OCI-LY7 (cell line): ENCODE measurements at regions of chr1 and their contacts with region 1.

Region 1: GRCh38 chr1:53945433-53946251 is at the start of gene IFT25:
- DNase-seq: peak; percentile 92
- H3K4me3 ChIP-seq: peak within 1 kb of the TSS; percentile 71
- H3K27ac ChIP-seq: peak within 1 kb of the TSS; percentile 50
- H3K4me1 ChIP-seq: peaks cover 18% of the 10 kb centered on the region
- CTCF ChIP-seq: no peak
- total RNA-seq, gene IFT25: 57.0 and 61.0 TPM in 2 replicates

Region 2: DNA sequence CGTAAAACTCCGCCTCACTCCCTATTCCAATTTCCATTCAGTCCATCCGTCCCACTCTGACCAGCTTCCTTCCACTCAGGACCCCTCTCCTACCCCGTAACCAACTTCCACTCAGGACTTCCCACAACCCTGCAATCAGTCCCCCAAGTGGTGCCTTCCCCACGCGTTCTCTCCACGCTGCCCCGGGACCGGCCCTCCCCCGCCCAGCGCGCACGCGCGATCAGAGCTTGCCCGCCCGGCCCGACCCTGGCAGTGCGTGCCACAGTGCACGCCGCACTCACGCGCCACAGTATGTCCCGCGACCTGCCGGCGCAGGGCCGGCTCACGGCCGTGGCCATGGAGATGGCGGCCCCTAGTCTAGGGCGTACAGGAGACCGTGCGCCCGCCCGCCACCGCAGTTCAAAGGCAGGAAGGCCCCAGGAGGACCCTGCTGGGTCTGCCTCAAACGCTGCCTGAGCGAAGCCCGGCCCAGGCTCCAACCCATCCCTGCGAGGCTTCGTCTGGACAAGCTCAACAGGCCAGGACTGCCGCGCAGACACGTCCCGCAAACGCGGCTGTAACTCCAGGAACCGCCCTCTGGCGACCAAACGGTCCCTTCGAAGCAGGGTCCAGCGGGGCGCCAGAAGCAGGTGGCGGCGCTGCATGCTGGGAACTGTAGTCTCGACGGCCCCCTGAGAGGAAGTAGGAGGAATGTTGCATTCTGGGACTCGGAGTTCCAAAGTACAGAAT is 107.6 kb before region 1 on chr1 and contains the start of gene NDC1:
- CTCF ChIA-PET with region 1: no interaction called
- POLR2A ChIA-PET with region 1: interaction called, 7 read pairs
- intact Hi-C with region 1: loop called (anchors 1 kb)
- DNase-seq: peak; percentile 96
- H3K4me3 ChIP-seq: peak within 1 kb of the TSS; percentile 83
- H3K27ac ChIP-seq: peak within 1 kb of the TSS; percentile 83
- H3K4me1 ChIP-seq: peaks cover 32% of the 10 kb centered on the region
- CTCF ChIP-seq: peak; percentile 23; the same call in 1 of the 2 replicates
- total RNA-seq, gene NDC1: 40.0 and 51.8 TPM in 2 replicates

Region 3: GRCh38 chr1:53860967-53861411 is 84.7 kb before region 1 on chr1:
- CTCF ChIA-PET with region 1: interaction called, 12 read pairs
- POLR2A ChIA-PET with region 1: interaction called, 8 read pairs
- intact Hi-C with region 1: loop called (anchors 1 kb)
- DNase-seq: peak; percentile 75
- H3K4me3 ChIP-seq: no peak overlapping the region
- H3K27ac ChIP-seq: no peak overlapping the region
- H3K4me1 ChIP-seq: peaks cover 14% of the 10 kb centered on the region
- CTCF ChIP-seq: peak; percentile 95

Region 4: GRCh38 chr1:53878492-53879105 is 67.0 kb before region 1 on chr1:
- CTCF ChIA-PET with region 1: interaction called, 5 read pairs
- POLR2A ChIA-PET with region 1: interaction called, 5 read pairs
- intact Hi-C with region 1: loop called (anchors 5 kb)
- DNase-seq: peak; percentile 67
- H3K4me3 ChIP-seq: no peak overlapping the region
- H3K27ac ChIP-seq: no peak overlapping the region
- H3K4me1 ChIP-seq: no peaks in the 10 kb centered on the region
- CTCF ChIP-seq: peak; percentile 91

Region 5: GRCh38 chr1:53889304-53890298 is 56.0 kb before region 1 on chr1 and contains the start of gene YIPF1:
- CTCF ChIA-PET with region 1: no interaction called
- POLR2A ChIA-PET with region 1: interaction called, 16 read pairs
- intact Hi-C with region 1: loop called (anchors 2 kb)
- DNase-seq: peak; percentile 92
- H3K4me3 ChIP-seq: peak within 1 kb of the TSS; percentile 78
- H3K27ac ChIP-seq: no peak within 1 kb of the TSS
- H3K4me1 ChIP-seq: peaks cover 21% of the 10 kb centered on the region
- CTCF ChIP-seq: no peak
- total RNA-seq, gene YIPF1: 13.7 and 16.7 TPM in 2 replicates

Region 6: GRCh38 chr1:53919675-53920066 is 26.0 kb before region 1 on chr1:
- CTCF ChIA-PET with region 1: no interaction called
- POLR2A ChIA-PET with region 1: interaction called, 10 read pairs
- intact Hi-C with region 1: no loop called
- DNase-seq: no peak
- H3K4me3 ChIP-seq: no peak overlapping the region
- H3K27ac ChIP-seq: no peak overlapping the region
- H3K4me1 ChIP-seq: no peaks in the 10 kb centered on the region
- CTCF ChIP-seq: no peak

Region 7: DNA sequence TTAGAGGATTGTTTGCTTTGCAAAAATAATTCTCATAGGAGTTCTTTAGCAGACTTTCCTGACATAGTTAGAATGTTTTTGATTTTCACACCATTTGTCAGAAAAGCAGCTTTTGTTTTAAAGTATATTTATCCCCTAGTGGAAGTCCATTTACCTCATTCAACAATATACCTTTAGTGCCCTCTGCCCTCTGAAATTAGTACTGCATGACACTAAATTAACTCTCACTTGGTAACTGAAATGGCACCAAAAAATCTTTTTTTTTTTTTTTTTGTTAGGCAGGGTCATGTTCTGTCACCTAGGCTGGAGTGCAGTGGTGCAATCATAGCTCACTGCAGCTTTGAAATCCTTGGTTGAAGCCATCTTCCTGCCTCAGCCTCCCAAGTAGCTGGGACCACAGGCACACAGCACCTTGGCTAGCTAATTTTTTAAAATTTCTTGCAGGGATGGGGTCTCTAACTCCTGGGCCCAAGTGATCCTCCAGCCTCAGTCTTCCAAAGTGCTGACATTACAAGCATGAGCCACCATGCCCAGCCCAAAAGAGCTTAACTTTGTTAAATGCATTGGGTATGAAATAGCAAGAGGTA is 14.1 kb after region 1 on chr1:
- CTCF ChIA-PET with region 1: interaction called, 6 read pairs
- POLR2A ChIA-PET with region 1: interaction called, 12 read pairs
- intact Hi-C with region 1: no loop called
- DNase-seq: peak; percentile 55
- H3K4me3 ChIP-seq: no peak overlapping the region
- H3K27ac ChIP-seq: no peak overlapping the region
- H3K4me1 ChIP-seq: no peaks in the 10 kb centered on the region
- CTCF ChIP-seq: peak; percentile 90

Region 8: GRCh38 chr1:54081306-54082270 is 135.9 kb after region 1 on chr1:
- CTCF ChIA-PET with region 1: no interaction called
- POLR2A ChIA-PET with region 1: no interaction called
- intact Hi-C with region 1: no loop called
- DNase-seq: peak; percentile 65
- H3K4me3 ChIP-seq: no peak overlapping the region
- H3K27ac ChIP-seq: no peak overlapping the region
- H3K4me1 ChIP-seq: no peaks in the 10 kb centered on the region
- CTCF ChIP-seq: peak; percentile 96